ENCODE measurements at regions of chrX and their contacts with region 1.

Region 1: GRCh38 chrX:39261446-39262147 is 460.3 kb downstream of the MID1IP1 start:
- DNase-seq: peak; percentile 1
- H3K4me3 Mint-ChIP-seq: no peak overlapping the region
- H3K27ac Mint-ChIP-seq: peak overlapping the region; percentile 89
- H3K4me1 Mint-ChIP-seq: peaks cover 43% of the 10 kb centered on the region
- H3K27me3 Mint-ChIP-seq: no peaks in the 10 kb centered on the region

Region 2: DNA sequence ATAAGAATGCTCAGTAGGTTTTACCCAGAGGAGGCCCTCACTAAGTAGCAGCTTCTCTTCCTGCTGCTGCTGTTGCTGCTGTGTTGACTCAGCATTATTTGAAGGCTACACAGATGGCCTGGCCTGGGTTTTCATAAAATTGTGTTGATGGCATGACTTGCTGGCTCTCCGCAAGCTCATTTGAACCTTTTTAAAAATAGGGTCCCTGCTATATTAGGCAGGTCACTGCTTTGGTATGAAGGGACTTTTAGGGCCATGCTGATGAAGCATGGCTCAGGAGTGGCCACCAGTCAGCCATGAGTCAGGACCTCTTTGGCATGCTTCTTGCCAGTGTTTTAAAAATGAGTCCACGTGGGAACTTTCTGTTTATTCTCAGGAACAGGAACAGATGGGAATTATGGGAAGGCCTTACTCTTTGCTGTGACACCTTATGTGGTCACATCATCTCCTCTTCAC is 331.6 kb before region 1 on chrX:
- intact Hi-C with region 1: no loop called
- DNase-seq: no peak
- H3K4me3 Mint-ChIP-seq: no peak overlapping the region
- H3K27ac Mint-ChIP-seq: no peak overlapping the region
- H3K4me1 Mint-ChIP-seq: no peaks in the 10 kb centered on the region
- H3K27me3 Mint-ChIP-seq: no peaks in the 10 kb centered on the region

Region 3: DNA sequence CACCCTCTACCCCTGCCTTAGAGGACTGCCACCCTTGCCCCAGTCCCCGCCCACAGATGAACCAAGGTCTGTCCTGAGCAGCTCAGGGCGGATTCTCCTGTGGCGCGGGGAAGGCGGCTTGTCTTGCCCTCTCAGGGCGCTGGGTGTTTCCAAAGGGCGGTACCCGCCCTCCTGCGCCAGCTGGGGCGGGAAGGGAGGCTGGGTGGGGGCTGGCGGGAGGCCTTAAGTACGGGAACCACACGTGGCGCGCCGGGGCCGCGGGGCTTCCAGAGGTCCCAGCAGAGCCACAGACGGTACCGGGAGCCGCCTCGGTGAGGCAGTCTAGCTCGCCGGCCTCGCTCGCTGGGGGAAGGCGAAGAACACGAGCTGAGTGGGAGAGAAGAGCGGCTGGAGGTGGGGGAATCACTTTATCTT is 99.3 kb before region 1 on chrX:
- intact Hi-C with region 1: loop called (anchors 2 kb)
- DNase-seq: no peak
- H3K4me3 Mint-ChIP-seq: peak overlapping the region; percentile 22
- H3K27ac Mint-ChIP-seq: peak overlapping the region; percentile 71
- H3K4me1 Mint-ChIP-seq: peaks cover 45% of the 10 kb centered on the region
- H3K27me3 Mint-ChIP-seq: peaks cover 2% of the 10 kb centered on the region

Region 4: DNA sequence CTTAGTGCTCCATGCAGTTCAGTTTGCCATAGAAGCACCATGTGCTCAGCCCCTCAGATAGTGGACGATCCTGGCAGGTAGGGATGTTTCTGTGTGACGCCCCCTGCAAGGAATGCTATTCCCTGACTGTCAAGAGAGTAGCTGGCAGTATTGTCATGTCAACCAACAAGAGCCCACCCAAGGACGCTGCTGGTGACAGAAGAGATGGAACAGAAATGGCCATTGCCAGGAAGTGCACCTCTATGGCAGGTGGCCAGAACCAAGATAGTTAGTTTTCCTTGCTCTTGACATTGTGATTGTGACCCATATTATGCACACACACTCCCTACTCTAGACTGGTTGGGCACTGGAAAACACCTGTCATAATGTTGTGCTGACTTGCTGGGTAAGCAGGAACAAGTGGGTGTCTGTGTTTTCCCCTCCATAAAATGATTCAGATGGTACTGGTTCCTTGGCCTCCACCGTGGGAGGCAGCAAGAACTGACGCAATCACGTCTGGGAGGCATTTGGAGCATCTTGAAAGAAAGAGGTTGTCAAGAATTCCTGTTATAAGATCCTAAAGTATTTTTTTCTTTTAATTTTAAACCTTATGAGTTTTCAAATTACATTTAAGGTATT is 47.5 kb after region 1 on chrX:
- intact Hi-C with region 1: loop called (anchors 1 kb)
- DNase-seq: peak; percentile 3
- H3K4me3 Mint-ChIP-seq: peak overlapping the region; percentile 58
- H3K27ac Mint-ChIP-seq: peak overlapping the region; percentile 100
- H3K4me1 Mint-ChIP-seq: peaks cover 67% of the 10 kb centered on the region
- H3K27me3 Mint-ChIP-seq: no peaks in the 10 kb centered on the region

Region 5: DNA sequence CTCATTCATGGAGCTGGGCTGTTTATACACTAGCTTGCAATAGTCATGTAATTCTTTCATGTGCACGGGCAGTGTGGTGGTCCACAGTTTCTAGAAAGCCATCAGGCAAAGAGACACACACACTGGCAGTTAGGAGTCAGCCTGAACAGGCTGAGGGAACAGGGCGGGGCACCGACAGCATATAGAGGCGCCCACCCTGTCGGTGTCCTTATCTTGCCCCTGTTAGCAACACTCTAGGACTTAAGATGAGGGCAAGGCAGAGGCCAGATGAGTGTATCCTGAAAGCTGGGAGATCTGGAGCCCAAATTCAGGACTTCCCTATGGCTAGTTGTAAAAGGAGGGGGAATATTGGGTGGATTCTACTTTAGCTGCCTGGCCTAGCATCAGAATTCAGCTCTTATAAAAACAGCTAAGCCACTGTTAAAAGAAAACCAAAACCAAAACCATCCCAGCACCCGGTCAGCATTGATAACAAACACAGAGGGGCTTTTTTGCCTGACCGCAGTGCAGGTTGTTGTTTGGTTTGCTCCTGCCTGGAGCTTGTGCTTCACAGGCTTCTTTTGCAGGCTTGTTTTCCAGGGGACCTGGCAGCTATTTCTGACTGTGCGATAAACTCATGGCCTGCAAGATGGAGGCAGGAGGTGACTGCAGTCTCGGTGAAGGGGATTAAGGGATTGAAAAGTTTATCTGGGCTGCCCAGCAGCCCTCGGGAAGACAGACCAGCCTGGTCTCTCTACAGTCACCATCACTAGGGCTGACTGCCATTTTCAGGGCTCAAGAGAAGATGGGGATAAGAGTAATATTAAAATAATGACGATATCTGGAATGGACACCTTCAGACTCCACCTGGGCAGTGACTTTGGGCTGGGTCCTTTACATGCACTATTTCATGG is 178.6 kb after region 1 on chrX:
- intact Hi-C with region 1: loop called (anchors 1 kb)
- DNase-seq: peak; percentile 8
- H3K4me3 Mint-ChIP-seq: no peak overlapping the region
- H3K27ac Mint-ChIP-seq: peak overlapping the region; percentile 91
- H3K4me1 Mint-ChIP-seq: peaks cover 44% of the 10 kb centered on the region
- H3K27me3 Mint-ChIP-seq: no peaks in the 10 kb centered on the region

Region 6: DNA sequence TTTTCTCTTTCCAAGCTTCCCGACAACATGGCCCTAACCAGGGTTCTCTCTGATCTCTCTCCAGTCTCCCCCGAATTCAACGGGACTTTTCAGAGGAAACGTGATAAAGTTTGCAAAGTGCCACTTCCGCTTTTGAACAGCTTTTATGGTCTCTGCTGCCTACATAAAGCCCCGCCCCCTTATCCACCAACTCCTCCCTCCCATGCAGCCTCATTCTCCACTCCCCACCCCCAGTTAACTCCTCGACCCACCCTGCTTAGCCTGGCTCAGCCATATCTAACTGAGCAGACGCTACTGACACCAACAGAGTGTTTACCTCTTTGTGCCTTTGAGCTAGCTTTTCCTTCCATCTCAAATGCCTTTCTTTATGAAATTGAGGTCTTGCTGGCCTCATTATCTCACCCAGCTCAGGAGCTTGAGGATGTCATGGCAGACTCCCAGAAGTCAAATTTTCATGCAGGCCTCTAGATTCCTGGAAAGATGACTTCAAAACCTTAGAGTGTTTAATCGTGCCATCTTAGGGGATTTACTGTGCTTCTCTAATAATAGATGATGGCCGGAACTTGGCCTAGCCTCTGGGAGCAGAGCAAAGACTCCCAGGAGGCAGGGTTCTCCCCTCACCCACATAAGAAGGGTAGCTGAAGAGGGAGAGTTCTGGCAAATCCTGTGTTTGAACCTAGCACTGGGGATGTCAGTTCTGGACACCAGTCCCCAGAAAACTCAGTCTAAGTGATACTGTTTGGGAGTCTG is 230.1 kb after region 1 on chrX:
- intact Hi-C with region 1: loop called (anchors 5 kb)
- DNase-seq: peak; percentile 36
- H3K4me3 Mint-ChIP-seq: peak overlapping the region; percentile 24
- H3K27ac Mint-ChIP-seq: peak overlapping the region; percentile 63
- H3K4me1 Mint-ChIP-seq: peaks cover 41% of the 10 kb centered on the region
- H3K27me3 Mint-ChIP-seq: no peaks in the 10 kb centered on the region

Region 7: DNA sequence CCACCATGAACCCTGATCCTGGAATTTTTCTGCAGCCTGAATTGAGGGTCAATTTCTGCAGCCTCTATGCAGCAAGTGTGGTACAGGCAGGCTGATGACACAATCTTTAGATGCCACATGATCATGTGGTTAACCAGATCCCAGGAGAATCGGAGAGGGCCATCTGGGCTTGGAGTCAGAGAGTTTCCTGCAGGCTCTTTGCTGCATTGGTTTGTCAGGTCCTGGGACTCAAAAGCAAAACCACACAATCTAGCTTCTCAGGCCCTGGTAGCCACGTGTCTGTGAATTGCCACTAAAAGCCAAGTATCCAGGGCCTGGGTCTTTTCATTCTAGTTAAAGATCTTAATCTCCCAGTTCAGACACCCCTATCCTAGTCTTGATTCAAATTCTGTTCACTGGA is 371.7 kb after region 1 on chrX:
- intact Hi-C with region 1: loop called (anchors 5 kb)
- DNase-seq: no peak
- H3K4me3 Mint-ChIP-seq: no peak overlapping the region
- H3K27ac Mint-ChIP-seq: no peak overlapping the region
- H3K4me1 Mint-ChIP-seq: peaks cover 23% of the 10 kb centered on the region
- H3K27me3 Mint-ChIP-seq: no peaks in the 10 kb centered on the region

Measured in activated T-helper 1 cell treated with anti-CD3 and anti-CD28 coated beads, Interleukin-12 subunit alpha, Interleukin-12 subunit beta, Interleukin-2, Interleukin-4 antibody, amounts not matched to agents 30 ng/mL and 10 ng/mL and 1 ng/mL, durations not matched to agents 14 hours and 24 hours and 36 hours (primary cell).